Left cardiac atrium (tissue), 4 donors: ENCODE measurements at regions of chr3 and their contacts with region 1.

Region 1: GRCh38 chr3:126679318-126679751 is 24.4 kb upstream of the TXNRD3 start:
- DNase-seq: peak; percentile 80
- ATAC-seq: peak; percentile 84 to 94

Region 2: DNA sequence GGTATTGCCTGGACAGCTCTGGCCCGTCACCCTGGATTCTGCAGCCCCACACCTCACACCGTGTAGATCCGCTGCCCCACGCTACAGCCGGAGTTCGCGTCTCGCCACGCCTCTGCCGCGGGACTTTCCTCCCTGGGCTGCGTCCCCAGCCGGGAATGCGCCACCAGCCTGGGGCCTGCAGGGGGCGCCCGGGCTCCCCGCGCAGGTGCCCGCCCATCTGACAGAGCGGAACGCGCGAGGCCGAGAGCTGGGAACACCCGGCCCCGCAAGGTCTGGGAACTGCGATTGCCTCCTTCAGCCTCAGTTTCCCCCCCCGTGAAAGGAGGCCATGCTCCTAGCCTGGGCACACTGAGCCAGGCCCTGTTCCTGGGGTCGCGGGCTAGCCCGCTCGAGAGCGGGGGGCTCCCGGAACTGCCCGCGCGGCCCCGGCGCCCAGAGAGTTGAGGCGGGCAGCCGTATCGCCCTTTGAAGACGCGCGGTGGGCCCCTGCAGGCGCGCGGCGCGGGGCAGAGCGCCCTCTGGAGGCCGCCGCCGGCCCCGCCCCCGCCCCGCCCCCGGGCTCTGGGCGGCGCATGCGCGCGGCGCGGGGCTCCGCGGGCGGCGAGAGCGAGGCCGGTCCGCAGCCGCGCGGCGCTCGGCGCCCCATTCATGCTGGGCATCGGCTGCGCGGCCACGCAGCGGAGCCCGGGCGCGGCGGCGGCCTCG is 303.3 kb after region 1 on chr3 and contains the start of gene PLXNA1:
- intact Hi-C with region 1: loop called (anchors 2 to 10 kb)
- DNase-seq: peak; percentile 87
- ATAC-seq: peak; percentile 88 to 89
- total RNA-seq, gene PLXNA1: 18.6 to 20.4 TPM

Region 3: GRCh38 chr3:127177231-127177630 is 497.9 kb after region 1 on chr3:
- intact Hi-C with region 1: loop called in 1 of 2 experiments (anchors 5 kb)
- DNase-seq: no peak
- ATAC-seq: no peak

Region 4: GRCh38 chr3:127455541-127456450 is 776.5 kb after region 1 on chr3:
- intact Hi-C with region 1: loop called (anchors 2 to 10 kb)
- DNase-seq: peak; percentile 72
- ATAC-seq: peak; percentile 92 to 93

Region 5: GRCh38 chr3:127544192-127544802 is 865.0 kb after region 1 on chr3:
- intact Hi-C with region 1: loop called (anchors 5 kb)
- DNase-seq: peak; percentile 80
- ATAC-seq: peak in 1 of 2 donors; percentile 48